AG04449 (cell line): ENCODE measurements at regions of chr17 and their contacts with region 1.

Region 1: DNA sequence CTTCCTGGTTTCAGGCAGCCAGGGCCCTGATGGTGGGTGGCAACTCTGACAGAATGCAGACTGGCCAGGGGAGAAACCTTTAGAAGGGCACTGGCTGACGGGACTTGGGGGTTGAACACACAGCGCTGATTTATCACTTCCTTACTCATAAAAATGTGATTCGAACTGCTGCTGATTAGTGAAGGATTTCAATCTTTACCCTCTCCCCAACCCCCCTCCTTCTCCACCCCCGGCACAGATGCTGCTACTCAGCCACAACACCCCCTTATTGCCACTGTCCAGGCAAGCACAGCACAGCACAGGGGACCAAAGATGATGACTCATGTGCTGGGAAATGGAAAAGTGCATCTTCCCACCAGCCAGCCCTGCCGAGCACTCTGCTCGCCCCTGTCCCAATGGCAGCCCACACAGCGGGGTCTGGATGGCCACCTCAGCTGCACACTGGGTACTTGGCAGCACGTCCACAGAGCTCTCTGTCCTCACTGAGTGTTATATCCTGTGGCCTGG is 70.1 kb downstream of the SMG6 start:
- DNase-seq: no peak
- H3K4me3 ChIP-seq: no peak overlapping the region
- CTCF ChIP-seq: no peak

Region 2: DNA sequence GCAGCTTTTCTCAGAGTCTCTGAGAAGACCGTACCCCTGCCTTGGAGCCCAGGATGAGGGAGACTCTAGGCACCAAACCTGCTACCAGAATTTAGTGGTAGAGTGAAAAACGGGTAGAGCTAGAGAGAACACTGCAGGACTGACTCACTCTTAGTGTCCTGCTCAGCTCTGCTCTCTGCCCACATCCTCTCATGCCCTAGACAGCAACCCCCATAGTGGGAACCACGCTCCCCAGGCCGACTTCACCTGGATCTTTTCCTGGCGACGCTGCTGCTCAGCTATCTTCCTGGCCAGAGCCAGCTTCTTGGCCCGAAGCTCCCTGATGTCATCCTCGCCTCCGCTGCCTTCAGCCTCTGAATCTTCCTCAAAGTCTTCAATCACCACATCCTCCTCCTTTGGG is 151.9 kb before region 1 on chr17:
- CTCF ChIA-PET with region 1: interaction called, 10 read pairs
- POLR2A ChIA-PET with region 1: interaction called, 4 read pairs
- DNase-seq: no peak
- H3K4me3 ChIP-seq: no peak overlapping the region
- CTCF ChIP-seq: no peak

Region 3: GRCh38 chr17:2094891-2095535 is 138.5 kb before region 1 on chr17:
- CTCF ChIA-PET with region 1: interaction called, 15 read pairs
- POLR2A ChIA-PET with region 1: no interaction called
- DNase-seq: no peak
- H3K4me3 ChIP-seq: no peak overlapping the region
- CTCF ChIP-seq: peak; percentile 89

Region 4: GRCh38 chr17:2215616-2216364 is 17.7 kb before region 1 on chr17:
- CTCF ChIA-PET with region 1: interaction called, 101 read pairs
- POLR2A ChIA-PET with region 1: interaction called, 3 read pairs
- DNase-seq: no peak
- H3K4me3 ChIP-seq: peak overlapping the region; percentile 42
- CTCF ChIP-seq: no peak